OCI-LY7 (cell line): ENCODE measurements at regions of chr1 and their contacts with region 1.

Region 1: GRCh38 chr1:203216274-203217138 is 13.0 kb downstream of the CHIT1 start:
- DNase-seq: peak; percentile 73
- H3K4me3 ChIP-seq: no peak overlapping the region
- H3K27ac ChIP-seq: no peak overlapping the region
- H3K4me1 ChIP-seq: no peaks in the 10 kb centered on the region
- CTCF ChIP-seq: peak; percentile 88

Region 2: GRCh38 chr1:203038891-203039608 is 177.5 kb before region 1 on chr1:
- CTCF ChIA-PET with region 1: interaction called, 9 read pairs
- POLR2A ChIA-PET with region 1: no interaction called
- intact Hi-C with region 1: loop called (anchors 1 kb)
- DNase-seq: peak; percentile 67
- H3K4me3 ChIP-seq: no peak overlapping the region
- H3K27ac ChIP-seq: no peak overlapping the region
- H3K4me1 ChIP-seq: peaks cover 8% of the 10 kb centered on the region
- CTCF ChIP-seq: peak; percentile 98

Region 3: DNA sequence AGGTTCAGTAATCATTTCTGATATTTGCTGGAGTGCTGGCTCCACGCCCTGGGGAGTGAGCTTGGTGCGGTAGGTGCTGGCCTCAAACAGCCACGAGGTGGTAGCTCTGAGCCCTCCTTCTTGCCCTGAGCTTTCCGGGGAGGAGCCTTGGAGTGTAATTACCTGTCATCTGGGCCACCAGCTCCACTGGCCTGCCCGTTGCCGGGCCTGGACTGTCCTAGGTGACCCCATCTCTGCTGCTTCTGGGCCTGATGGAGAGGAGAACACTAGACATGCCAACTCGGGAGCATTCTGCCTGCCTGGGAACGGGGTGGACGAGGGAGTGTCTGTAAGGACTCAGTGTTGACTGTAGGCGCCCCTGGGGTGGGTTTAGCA is 50.0 kb before region 1 on chr1:
- CTCF ChIA-PET with region 1: interaction called, 3 read pairs
- POLR2A ChIA-PET with region 1: no interaction called
- intact Hi-C with region 1: loop called (anchors 2 kb)
- DNase-seq: peak; percentile 35
- H3K4me3 ChIP-seq: no peak overlapping the region
- H3K27ac ChIP-seq: no peak overlapping the region
- H3K4me1 ChIP-seq: no peaks in the 10 kb centered on the region
- CTCF ChIP-seq: peak; percentile 65